ENCODE measurements at regions of chr16 and their contacts with region 1.

Region 1: GRCh38 chr16:72832621-72833248 is 215.2 kb downstream of the ZFHX3 start:
- DNase-seq: peak; percentile 93
- H3K4me3 Mint-ChIP-seq: no peak overlapping the region
- H3K27ac Mint-ChIP-seq: no peak overlapping the region
- H3K4me1 Mint-ChIP-seq: no peaks in the 10 kb centered on the region
- H3K27me3 Mint-ChIP-seq: no peaks in the 10 kb centered on the region
- CTCF ChIP-seq: peak; percentile 95

Region 2: GRCh38 chr16:72847187-72848027 is 14.7 kb after region 1 on chr16:
- CTCF ChIA-PET with region 1: interaction called, 16 read pairs
- intact Hi-C with region 1: no loop called
- DNase-seq: peak; percentile 60
- H3K4me3 Mint-ChIP-seq: no peak overlapping the region
- H3K27ac Mint-ChIP-seq: no peak overlapping the region
- H3K4me1 Mint-ChIP-seq: peaks cover 42% of the 10 kb centered on the region
- H3K27me3 Mint-ChIP-seq: no peaks in the 10 kb centered on the region
- CTCF ChIP-seq: peak; percentile 31

Region 3: GRCh38 chr16:72961121-72961763 is 128.5 kb after region 1 on chr16:
- CTCF ChIA-PET with region 1: interaction called, 23 read pairs
- intact Hi-C with region 1: loop called (anchors 5 kb)
- DNase-seq: peak; percentile 43
- H3K4me3 Mint-ChIP-seq: peak overlapping the region; percentile 21
- H3K27ac Mint-ChIP-seq: no peak overlapping the region
- H3K4me1 Mint-ChIP-seq: peaks cover 27% of the 10 kb centered on the region
- H3K27me3 Mint-ChIP-seq: no peaks in the 10 kb centered on the region
- CTCF ChIP-seq: peak; percentile 64

Region 4: DNA sequence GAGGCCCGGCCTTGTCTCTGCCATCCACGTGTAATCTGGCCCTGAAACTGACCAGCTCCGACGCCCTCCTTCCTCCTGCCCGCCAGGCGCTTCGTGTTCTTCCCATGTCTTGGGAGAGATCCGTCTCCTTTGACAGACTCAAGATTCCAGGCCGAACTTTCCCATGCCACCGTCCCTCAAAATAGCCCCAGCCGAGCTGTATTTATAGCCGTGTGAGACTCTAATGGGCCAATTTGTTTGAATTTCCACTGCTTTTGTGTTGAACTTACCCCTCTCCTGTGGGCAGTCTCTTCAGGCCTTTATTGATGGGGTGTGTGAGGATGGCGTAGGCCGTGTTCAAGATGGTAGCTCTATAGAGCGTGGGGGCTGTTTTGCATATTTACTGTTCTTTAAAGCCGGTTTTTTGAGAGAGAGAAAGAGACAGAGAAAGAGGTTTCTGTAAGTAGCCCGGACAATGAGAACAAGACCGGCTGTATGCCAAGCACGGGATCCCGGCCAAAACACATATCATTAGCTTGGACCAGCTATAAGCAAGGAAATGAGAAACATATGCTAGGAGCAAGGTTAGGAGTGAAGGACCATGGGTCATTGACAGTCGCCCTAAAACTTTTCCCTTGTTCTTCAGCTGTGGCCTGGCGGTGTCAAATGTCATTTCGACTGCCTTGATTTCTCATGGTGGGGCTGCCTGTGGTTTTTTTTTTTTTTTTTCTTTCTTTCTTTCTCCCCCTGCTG is 339.7 kb after region 1 on chr16:
- CTCF ChIA-PET with region 1: interaction called, 12 read pairs
- intact Hi-C with region 1: loop called (anchors 5 kb)
- DNase-seq: peak; percentile 46
- H3K4me3 Mint-ChIP-seq: no peak overlapping the region
- H3K27ac Mint-ChIP-seq: no peak overlapping the region
- H3K4me1 Mint-ChIP-seq: peaks cover 24% of the 10 kb centered on the region
- H3K27me3 Mint-ChIP-seq: peaks cover 60% of the 10 kb centered on the region
- CTCF ChIP-seq: peak; percentile 32

Region 5: DNA sequence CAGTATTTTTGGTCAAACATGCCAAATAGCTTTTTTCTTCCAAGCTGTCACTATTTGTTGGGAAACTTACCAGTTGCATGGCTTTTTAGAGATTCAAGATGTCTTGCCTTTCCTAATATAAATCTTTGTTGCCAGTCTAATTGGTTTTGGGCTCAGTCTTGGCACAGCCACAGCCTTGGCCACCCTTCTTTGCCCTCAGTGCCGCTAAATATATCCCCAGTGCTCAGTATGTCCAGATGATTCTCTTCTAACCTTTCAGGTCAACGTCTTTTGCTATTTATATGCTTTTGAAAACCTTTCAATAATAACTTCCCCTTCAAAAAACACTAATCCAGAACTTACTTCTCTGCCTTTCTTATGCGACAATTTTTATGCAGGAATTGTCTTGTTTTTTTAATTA is 698.3 kb after region 1 on chr16:
- CTCF ChIA-PET with region 1: no interaction called
- intact Hi-C with region 1: no loop called
- DNase-seq: no peak
- H3K4me3 Mint-ChIP-seq: no peak overlapping the region
- H3K27ac Mint-ChIP-seq: no peak overlapping the region
- H3K4me1 Mint-ChIP-seq: no peaks in the 10 kb centered on the region
- H3K27me3 Mint-ChIP-seq: peaks cover 63% of the 10 kb centered on the region
- CTCF ChIP-seq: no peak

Region 6: GRCh38 chr16:73878611-73879010 is 1045.9 kb after region 1 on chr16:
- CTCF ChIA-PET with region 1: interaction called, 10 read pairs
- intact Hi-C with region 1: no loop called
- DNase-seq: peak; percentile 30
- H3K4me3 Mint-ChIP-seq: no peak overlapping the region
- H3K27ac Mint-ChIP-seq: no peak overlapping the region
- H3K4me1 Mint-ChIP-seq: no peaks in the 10 kb centered on the region
- H3K27me3 Mint-ChIP-seq: peaks cover 79% of the 10 kb centered on the region
- CTCF ChIP-seq: peak; percentile 33